ENCODE measurements at regions of chr1 and their contacts with region 1.

Region 1: GRCh38 chr1:189323091-189323490 is 1154.6 kb downstream of the BRINP3 start:
- DNase-seq: no peak
- ATAC-seq: no peak
- H3K4me3 Mint-ChIP-seq: no peak overlapping the region
- H3K27ac Mint-ChIP-seq: no peak overlapping the region
- H3K4me1 Mint-ChIP-seq: no peaks in the 10 kb centered on the region
- H3K27me3 Mint-ChIP-seq: no peaks in the 10 kb centered on the region
- CTCF ChIP-seq: no peak

Region 2: DNA sequence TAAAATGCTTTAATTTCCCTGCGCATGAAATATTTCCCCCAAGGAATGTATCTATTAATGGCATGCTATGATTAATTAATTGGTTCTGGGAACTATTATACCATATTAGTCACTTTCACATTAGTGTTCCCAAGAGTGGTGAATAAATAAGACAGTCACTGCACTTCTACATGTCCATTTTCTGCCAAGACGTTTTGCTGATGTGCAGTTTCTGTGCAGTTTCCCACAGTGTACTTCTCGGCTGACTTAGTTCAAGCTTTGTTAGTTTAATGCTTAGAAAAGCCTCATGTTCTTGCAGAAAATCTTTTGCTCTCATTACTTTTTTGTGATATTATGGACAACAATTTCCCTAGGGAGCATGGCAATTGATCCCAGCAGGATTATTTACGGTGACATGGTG is 140.1 kb after region 1 on chr1:
- CTCF ChIA-PET with region 1: no interaction called
- POLR2A ChIA-PET with region 1: no interaction called
- intact Hi-C with region 1: loop called (anchors 2 kb)
- DNase-seq: no peak
- ATAC-seq: no peak
- H3K4me3 Mint-ChIP-seq: no peak overlapping the region
- H3K27ac Mint-ChIP-seq: no peak overlapping the region
- H3K4me1 Mint-ChIP-seq: no peaks in the 10 kb centered on the region
- H3K27me3 Mint-ChIP-seq: no peaks in the 10 kb centered on the region
- CTCF ChIP-seq: no peak